Breast epithelium (tissue), 4 donors: ENCODE measurements at regions of chr15 and their contacts with region 1.

Region 1: DNA sequence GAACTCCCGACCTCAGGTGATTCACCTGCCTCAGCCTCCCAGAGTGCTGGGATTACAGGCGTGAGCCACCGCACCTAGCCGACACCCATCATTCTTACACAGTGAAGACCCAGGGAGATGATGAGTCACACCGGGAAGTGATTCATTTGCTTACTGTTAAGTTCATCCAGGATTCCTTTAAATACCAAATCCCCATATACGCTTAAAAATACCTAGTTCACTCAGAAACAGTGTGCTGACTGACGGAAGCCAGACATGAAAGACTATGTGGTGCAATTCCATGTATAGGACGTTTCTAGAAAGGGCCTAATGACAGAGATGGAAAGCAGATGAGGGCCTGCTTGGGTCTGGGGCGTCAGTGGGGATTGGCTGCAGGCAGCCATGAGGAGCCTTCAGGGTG is 75.2 kb downstream of the APBA2 start:
- DNase-seq: no peak
- H3K4me3 ChIP-seq: no peak overlapping the region
- H3K27ac ChIP-seq: no peak overlapping the region
- H3K4me1 ChIP-seq: no peaks in the 10 kb centered on the region
- H3K27me3 ChIP-seq: no peaks in the 10 kb centered on the region
- CTCF ChIP-seq: no peak
- POLR2A ChIP-seq: no peak

Region 2: DNA sequence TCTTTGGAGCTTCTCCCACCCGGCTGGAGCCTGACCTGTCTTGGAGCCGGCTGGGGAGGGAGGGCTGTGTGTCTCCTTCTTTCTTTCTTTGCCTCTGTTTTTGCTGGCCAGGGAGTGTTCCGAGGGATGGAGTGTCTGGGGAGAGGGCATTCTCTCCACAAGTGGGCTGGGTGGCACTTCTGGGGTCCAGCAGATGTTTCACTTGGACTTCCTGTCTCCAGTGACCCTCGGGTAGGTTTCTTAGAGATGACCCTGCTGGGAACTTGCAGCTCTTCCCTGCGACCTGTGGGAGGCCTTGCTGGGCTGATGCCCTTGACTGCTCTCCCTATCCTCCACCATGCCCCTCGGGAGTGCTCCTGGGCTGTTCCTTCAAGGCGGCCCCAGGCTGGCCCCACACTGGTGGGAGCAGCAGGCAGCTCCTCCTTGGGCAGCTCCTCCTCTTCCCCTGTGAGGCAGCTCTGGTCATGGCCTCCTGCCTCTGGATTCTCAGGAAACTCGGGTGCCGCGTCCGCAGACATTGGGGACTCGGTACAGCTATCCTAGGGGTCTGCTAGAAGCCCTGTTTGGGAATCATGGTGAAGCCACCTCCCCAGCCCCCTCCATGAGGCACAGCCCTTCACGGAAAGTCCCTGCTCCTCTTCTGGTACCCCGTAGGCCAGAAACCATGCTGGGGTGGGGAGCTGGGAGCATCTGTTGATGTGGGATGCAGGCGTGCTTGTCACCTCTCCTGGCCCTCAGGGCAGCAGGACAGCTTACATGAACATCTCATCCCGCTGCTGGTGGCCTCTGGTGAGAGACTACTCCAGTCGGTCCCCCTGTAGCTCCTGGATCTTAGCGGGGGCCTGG is 30.2 kb before region 1 on chr15:
- intact Hi-C with region 1: loop called (anchors 1 kb)
- DNase-seq: no peak
- H3K4me3 ChIP-seq: no peak overlapping the region
- H3K27ac ChIP-seq: no peak overlapping the region
- H3K4me1 ChIP-seq: no peaks in the 10 kb centered on the region
- H3K27me3 ChIP-seq: no peaks in the 10 kb centered on the region
- CTCF ChIP-seq: no peak
- POLR2A ChIP-seq: no peak

Region 3: GRCh38 chr15:29070449-29071231 is 109.7 kb after region 1 on chr15:
- intact Hi-C with region 1: no loop called
- DNase-seq: no peak
- H3K4me3 ChIP-seq: no peak overlapping the region
- H3K27ac ChIP-seq: no peak overlapping the region
- H3K4me1 ChIP-seq: no peaks in the 10 kb centered on the region
- H3K27me3 ChIP-seq: no peaks in the 10 kb centered on the region
- CTCF ChIP-seq: no peak
- POLR2A ChIP-seq: no peak